Dorsolateral prefrontal cortex (tissue), 120 donors: ENCODE measurements at regions of chr1 and their contacts with region 1.

Region 1: GRCh38 chr1:151693076-151693651 is 23.4 kb downstream of the CELF3 start:
- DNase-seq: no peak
- H3K4me3 ChIP-seq: no peak overlapping the region
- H3K27ac ChIP-seq: peak overlapping the region in 21 of 59 donors; percentile 3 to 50 (median 19)
- H3K27me3 ChIP-seq: no peaks in the 10 kb centered on the region
- CTCF ChIP-seq: peak; percentile 18 to 75 (median 62)

Region 2: DNA sequence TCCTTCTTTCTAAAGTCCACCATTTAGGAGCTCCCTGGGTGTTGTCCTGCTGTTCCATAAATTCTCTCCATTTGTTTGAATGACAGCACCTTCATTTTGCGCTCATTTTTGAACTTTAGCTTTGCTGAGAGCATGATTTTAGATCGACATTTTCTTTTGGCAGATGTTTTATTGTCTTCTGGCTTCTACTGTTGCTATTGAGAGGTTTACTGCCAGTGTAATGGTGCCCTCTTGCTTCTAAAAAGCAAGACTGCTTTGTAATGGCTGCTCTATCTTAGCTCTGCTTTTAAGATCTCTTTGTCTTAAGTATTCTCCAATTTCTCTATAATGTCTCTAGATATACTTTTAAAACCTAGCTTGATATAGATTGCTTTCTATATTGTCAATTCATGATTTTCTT is 188.3 kb after region 1 on chr1:
- intact Hi-C with region 1: loop called in 1 of 2 experiments (anchors 5 kb)
- DNase-seq: no peak
- H3K4me3 ChIP-seq: no peak overlapping the region
- H3K27ac ChIP-seq: peak overlapping the region in 16 of 59 donors; percentile 2 to 63 (median 46)
- H3K27me3 ChIP-seq: no peaks in the 10 kb centered on the region
- CTCF ChIP-seq: peak in 55 of 56 donors; percentile 24 to 84 (median 63)